H1 (cell line): ENCODE measurements at regions of chr2 and their contacts with region 1.

Region 1: DNA sequence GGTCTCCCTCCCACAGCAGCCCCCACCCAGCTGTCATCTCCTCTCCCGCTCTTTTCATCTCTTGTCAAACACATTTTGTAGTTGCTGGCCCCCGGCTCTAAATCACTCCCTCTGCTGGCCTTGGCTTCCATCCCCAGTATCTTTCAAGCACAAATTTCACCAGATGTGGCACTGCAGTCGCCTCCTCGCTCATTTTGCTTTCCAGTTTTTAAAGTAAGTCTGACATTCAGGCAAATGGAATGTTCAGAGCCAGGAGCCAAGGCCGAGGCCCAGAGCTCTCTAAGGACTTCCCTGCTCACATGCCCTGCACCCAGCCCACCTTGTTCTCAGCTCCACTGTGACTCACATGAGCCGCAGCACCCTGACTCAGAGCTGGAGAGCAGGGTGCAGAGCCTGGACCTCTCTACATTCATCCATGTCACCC is 158.4 kb downstream of the GALNT14 start:
- DNase-seq: no peak
- H3K4me3 ChIP-seq: no peak overlapping the region
- H3K27ac ChIP-seq: no peak overlapping the region
- H3K4me1 ChIP-seq: no peaks in the 10 kb centered on the region; a peak in 1 of 7 replicates
- H3K27me3 ChIP-seq: no peaks in the 10 kb centered on the region
- CTCF ChIP-seq: peak in 2 of 3 experiments; percentile 17 to 72; a peak in 3 of 4 replicates
- EP300 ChIP-seq: no peak
- POLR2A ChIP-seq: no peak
- RAD21 ChIP-seq: peak in 1 of 2 experiments; percentile 29; a peak in 1 of 4 replicates

Region 2: DNA sequence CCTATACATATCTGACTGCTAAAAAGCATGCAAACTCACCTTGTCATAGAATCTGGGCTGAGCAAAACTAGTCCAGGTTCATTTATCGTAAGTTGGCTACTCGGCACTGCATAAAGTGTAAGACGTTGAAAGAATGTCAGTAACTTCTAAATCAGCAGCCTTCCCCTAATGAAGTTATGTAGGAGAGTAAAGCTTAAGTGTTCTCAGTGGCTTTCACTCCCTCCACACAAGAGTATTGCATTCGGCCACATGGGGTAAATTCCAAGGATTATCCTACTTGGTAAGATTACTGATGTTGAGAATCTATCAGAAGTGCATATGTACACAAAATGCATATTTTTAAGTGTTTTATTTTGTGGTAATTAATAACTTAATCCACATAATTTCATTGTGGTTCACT is 402.7 kb before region 1 on chr2:
- CTCF ChIA-PET with region 1: no interaction called
- POLR2A ChIA-PET with region 1: no interaction called
- DNase-seq: no peak
- H3K4me3 ChIP-seq: no peak overlapping the region
- H3K27ac ChIP-seq: no peak overlapping the region
- H3K4me1 ChIP-seq: peaks cover 0 to 9% (median 5%) of the 10 kb centered on the region in 4 experiments; a peak in 4 of 7 replicates
- H3K27me3 ChIP-seq: no peaks in the 10 kb centered on the region
- CTCF ChIP-seq: no peak
- EP300 ChIP-seq: no peak
- POLR2A ChIP-seq: no peak
- RAD21 ChIP-seq: no peak

Region 3: DNA sequence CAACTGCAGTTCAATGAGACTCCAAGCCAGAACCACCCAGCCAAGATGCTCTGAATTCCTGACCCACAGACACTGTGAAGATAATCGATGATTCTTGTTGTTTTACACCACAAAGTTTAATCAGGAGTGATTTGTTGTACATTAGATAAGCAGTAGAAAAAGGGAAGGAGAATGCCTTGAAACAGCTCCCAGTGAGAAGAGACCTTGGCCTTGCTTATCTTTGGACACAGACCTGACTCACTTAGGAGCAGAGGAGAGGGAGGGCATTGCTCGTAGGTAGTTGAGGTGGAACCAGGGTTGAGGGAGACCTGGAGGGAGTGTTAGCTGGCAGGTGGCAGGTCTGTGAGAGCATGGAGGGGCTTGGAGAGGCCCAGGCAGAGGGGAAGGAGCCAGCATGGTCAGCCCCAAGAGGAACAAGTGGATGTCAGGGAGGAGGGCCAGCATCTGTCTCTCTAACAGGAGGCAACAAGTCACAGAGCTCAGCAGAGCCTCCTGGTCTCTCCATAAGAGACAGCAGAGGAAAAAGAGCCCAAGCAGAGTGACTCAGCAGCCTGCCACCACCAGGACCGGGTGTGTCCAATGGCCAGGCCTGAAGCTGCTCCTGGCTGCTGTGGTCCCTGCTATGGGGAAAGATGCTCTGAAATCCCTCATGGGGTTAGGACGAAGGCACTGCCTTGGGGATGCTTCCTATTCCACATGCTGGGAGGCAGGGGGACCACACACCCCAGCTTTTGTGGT is 11.0 kb before region 1 on chr2:
- CTCF ChIA-PET with region 1: interaction called, 34 read pairs
- POLR2A ChIA-PET with region 1: no interaction called
- DNase-seq: no peak
- H3K4me3 ChIP-seq: no peak overlapping the region
- H3K27ac ChIP-seq: no peak overlapping the region
- H3K4me1 ChIP-seq: no peaks in the 10 kb centered on the region; a peak in 1 of 7 replicates
- H3K27me3 ChIP-seq: no peaks in the 10 kb centered on the region
- CTCF ChIP-seq: no peak
- EP300 ChIP-seq: no peak
- POLR2A ChIP-seq: no peak
- RAD21 ChIP-seq: no peak

Region 4: DNA sequence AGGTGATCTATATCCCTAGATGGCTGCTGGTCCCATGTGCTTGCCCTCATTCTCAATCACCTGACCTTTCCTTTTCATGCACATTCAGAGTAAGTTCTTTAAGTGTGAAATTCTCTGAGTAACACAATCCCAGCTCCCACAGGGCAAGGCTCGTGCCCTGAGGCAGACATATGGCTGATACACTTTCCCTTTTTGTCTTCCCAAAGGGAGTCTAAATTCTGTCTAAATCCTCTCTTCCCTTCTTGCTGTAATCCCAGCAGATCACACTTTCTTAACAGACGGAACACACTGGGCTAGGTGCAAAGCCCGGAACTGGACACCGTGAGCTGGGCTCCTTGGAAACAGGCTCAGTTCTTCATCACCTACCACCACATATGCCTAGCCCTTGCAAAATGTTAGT is 10.8 kb after region 1 on chr2:
- CTCF ChIA-PET with region 1: interaction called, 25 read pairs
- POLR2A ChIA-PET with region 1: no interaction called
- DNase-seq: no peak
- H3K4me3 ChIP-seq: no peak overlapping the region
- H3K27ac ChIP-seq: no peak overlapping the region
- H3K4me1 ChIP-seq: peaks cover 0 to 5% (median 2%) of the 10 kb centered on the region in 4 experiments; a peak in 4 of 7 replicates
- H3K27me3 ChIP-seq: no peaks in the 10 kb centered on the region
- CTCF ChIP-seq: no peak
- EP300 ChIP-seq: no peak
- POLR2A ChIP-seq: no peak
- RAD21 ChIP-seq: no peak

Region 5: DNA sequence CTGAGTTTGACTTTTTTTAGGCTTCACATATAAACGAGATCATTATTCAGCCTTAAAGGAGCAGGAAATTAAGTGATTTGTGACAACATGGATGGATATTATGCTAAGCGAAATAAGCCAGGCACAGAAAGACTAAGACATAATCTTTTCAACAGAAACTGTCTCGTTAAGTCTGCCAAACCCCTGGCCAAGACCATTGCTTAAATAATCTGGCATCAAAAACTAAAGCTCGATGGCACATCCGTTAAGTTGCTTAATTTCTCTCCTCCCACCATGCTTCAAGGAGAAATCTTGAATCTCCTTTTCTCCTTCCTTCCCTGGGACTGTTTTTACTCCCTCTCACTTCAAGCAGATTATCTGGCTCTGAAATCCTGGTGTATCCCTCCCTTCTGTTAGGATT is 18.1 kb after region 1 on chr2:
- CTCF ChIA-PET with region 1: interaction called, 11 read pairs
- POLR2A ChIA-PET with region 1: no interaction called
- DNase-seq: no peak
- H3K4me3 ChIP-seq: no peak overlapping the region
- H3K27ac ChIP-seq: no peak overlapping the region
- H3K4me1 ChIP-seq: no peaks in the 10 kb centered on the region
- H3K27me3 ChIP-seq: no peaks in the 10 kb centered on the region
- CTCF ChIP-seq: no peak
- EP300 ChIP-seq: no peak
- POLR2A ChIP-seq: no peak
- RAD21 ChIP-seq: no peak